PC-9 (cell line): ENCODE measurements at regions of chr1 and their contacts with region 1.

Region 1: GRCh38 chr1:25819576-25820246 is at the start of gene MTFR1L:
- DNase-seq: peak; percentile 70 to 92
- H3K4me3 ChIP-seq: peak within 1 kb of the TSS; percentile 83
- H3K27ac ChIP-seq: peak within 1 kb of the TSS; percentile 69
- H3K4me1 ChIP-seq: peaks cover 16% of the 10 kb centered on the region
- H3K27me3 ChIP-seq: no peaks in the 10 kb centered on the region
- CTCF ChIP-seq: no peak
- total RNA-seq, gene MTFR1L: 40.9 and 41.7 TPM in 2 replicates

Region 2: DNA sequence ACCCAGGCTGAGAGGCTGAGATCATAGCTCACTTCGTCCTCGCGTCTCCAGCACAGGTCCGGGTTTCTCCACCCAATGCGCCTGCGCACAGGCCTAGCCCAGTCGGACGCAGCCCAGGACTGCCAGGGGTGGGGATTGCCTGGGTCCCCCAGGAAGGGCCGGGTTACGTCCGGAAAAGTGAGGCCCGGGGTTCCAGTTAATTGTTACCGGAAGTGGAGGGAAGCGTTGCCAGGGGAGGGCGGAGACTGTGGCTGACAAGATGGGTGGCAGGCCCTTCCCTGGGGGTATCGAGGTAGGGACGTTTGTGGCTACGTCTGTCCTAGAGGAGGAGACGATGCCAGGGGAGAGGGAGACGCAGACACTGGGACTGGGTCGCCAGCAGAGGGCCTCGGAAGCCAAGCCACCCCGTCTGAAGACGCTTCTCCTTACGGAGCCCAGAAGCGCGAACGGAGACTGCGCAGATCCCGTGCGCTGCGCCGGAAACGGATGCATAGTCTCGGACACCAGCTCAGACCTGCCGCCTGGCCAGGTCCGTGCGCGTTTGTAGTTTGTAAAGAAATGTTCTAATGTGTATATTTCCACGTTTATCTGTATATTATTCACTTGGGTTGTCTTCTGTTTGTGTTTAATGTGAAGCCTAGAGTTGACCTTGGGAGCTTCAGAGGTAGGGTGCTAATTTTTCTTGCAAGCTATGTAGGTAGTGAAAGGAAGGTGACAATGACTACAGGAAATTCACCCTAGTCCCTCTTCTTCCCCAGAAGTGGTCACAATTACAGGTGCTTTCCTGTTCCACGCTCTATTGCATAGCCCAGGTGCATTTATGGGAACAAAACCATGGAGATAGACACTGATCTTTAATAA is 579.8 kb before region 1 on chr1:
- CTCF ChIA-PET with region 1: no interaction called
- POLR2A ChIA-PET with region 1: no interaction called
- intact Hi-C with region 1: loop called (anchors 10 kb)
- DNase-seq: peak; percentile 77 to 95
- H3K4me3 ChIP-seq: peak overlapping the region; percentile 85
- H3K27ac ChIP-seq: peak overlapping the region; percentile 74
- H3K4me1 ChIP-seq: peaks cover 16% of the 10 kb centered on the region
- H3K27me3 ChIP-seq: no peaks in the 10 kb centered on the region
- CTCF ChIP-seq: peak; percentile 58

Region 3: GRCh38 chr1:25580927-25581326 is 238.8 kb before region 1 on chr1:
- CTCF ChIA-PET with region 1: interaction called, 10 read pairs
- POLR2A ChIA-PET with region 1: no interaction called
- intact Hi-C with region 1: no loop called
- DNase-seq: no peak
- H3K4me3 ChIP-seq: no peak overlapping the region
- H3K27ac ChIP-seq: no peak overlapping the region
- H3K4me1 ChIP-seq: no peaks in the 10 kb centered on the region
- H3K27me3 ChIP-seq: no peaks in the 10 kb centered on the region
- CTCF ChIP-seq: no peak

Region 4: GRCh38 chr1:25631750-25632485 is 187.8 kb before region 1 on chr1:
- CTCF ChIA-PET with region 1: no interaction called
- POLR2A ChIA-PET with region 1: no interaction called
- intact Hi-C with region 1: no loop called
- DNase-seq: no peak
- H3K4me3 ChIP-seq: no peak overlapping the region
- H3K27ac ChIP-seq: no peak overlapping the region
- H3K4me1 ChIP-seq: peaks cover 10% of the 10 kb centered on the region; the same call in 1 of the 2 replicates
- H3K27me3 ChIP-seq: no peaks in the 10 kb centered on the region
- CTCF ChIP-seq: no peak

Region 5: GRCh38 chr1:25754470-25755181 is 65.1 kb before region 1 on chr1:
- CTCF ChIA-PET with region 1: no interaction called
- POLR2A ChIA-PET with region 1: no interaction called
- intact Hi-C with region 1: no loop called
- DNase-seq: no peak
- H3K4me3 ChIP-seq: no peak overlapping the region
- H3K27ac ChIP-seq: no peak overlapping the region
- H3K4me1 ChIP-seq: no peaks in the 10 kb centered on the region
- H3K27me3 ChIP-seq: no peaks in the 10 kb centered on the region
- CTCF ChIP-seq: no peak

Region 6: DNA sequence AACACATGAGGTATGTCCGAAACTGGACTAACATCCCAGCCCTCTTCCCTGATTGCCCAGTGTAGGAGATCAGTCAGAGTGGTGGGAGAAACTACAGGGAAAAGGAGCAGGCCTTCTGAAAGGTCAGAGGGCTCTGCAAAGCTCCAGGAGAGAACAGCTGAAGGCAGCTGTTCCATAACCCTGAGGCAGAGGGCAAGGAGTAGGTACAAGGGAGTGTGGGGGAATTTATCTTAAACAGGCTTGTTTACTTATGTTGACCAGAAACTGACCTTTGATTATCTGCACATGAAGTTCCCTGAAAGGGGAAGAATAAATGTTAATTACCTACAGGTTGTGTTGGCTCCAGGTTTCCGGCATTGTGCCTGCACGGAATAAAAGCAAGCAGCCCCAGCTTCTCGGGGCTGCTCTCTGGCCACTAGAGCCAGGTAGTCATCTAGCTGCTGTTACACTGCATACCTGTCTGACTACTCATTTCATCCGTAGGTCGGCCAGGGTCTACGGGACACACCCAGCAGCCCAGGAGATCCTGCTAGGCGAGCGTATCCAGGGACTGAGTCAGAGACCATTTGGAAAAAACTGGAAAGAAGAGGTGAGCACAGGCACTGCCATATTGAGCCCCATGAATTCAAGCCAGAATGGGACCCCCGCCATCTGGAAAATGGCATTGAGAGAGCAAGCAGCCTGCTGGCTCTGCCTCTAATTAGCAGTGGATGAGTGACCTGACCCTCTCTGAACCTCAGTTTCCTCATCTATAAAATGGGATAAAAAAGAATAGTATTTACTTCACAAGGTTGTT is 70.7 kb after region 1 on chr1:
- CTCF ChIA-PET with region 1: interaction called, 9 read pairs
- POLR2A ChIA-PET with region 1: interaction called, 9 read pairs
- intact Hi-C with region 1: loop called (anchors 5 kb)
- DNase-seq: peak; percentile 91 to 97
- H3K4me3 ChIP-seq: peak overlapping the region; percentile 47
- H3K27ac ChIP-seq: peak overlapping the region; percentile 96
- H3K4me1 ChIP-seq: peaks cover 61% of the 10 kb centered on the region
- H3K27me3 ChIP-seq: no peaks in the 10 kb centered on the region
- CTCF ChIP-seq: no peak

Region 7: GRCh38 chr1:25904943-25905679 is 85.4 kb after region 1 on chr1:
- CTCF ChIA-PET with region 1: no interaction called
- POLR2A ChIA-PET with region 1: no interaction called
- intact Hi-C with region 1: loop called (anchors 5 kb)
- DNase-seq: peak in 1 of 2 experiments; percentile 89
- H3K4me3 ChIP-seq: peak overlapping the region; percentile 92
- H3K27ac ChIP-seq: no peak overlapping the region
- H3K4me1 ChIP-seq: peaks cover 15% of the 10 kb centered on the region
- H3K27me3 ChIP-seq: no peaks in the 10 kb centered on the region
- CTCF ChIP-seq: no peak

Region 8: GRCh38 chr1:26053718-26054560 is 234.2 kb after region 1 on chr1:
- CTCF ChIA-PET with region 1: no interaction called
- POLR2A ChIA-PET with region 1: no interaction called
- intact Hi-C with region 1: no loop called
- DNase-seq: no peak
- H3K4me3 ChIP-seq: no peak overlapping the region
- H3K27ac ChIP-seq: no peak overlapping the region
- H3K4me1 ChIP-seq: peaks cover 10% of the 10 kb centered on the region; the same call in 1 of the 2 replicates
- H3K27me3 ChIP-seq: no peaks in the 10 kb centered on the region
- CTCF ChIP-seq: no peak